ENCODE measurements at regions of chr15 and their contacts with region 1.

Region 1: GRCh38 chr15:75801859-75802593 is 41.2 kb upstream of the UBE2Q2 start:
- DNase-seq: peak; percentile 84 to 93
- H3K4me3 ChIP-seq: peak overlapping the region; percentile 17 to 23 (median 20)
- H3K27ac ChIP-seq: no peak overlapping the region
- H3K4me1 ChIP-seq: peaks cover 0 to 9% (median 8%) of the 10 kb centered on the region in 4 donors
- H3K27me3 ChIP-seq: peaks cover 0 to 56% (median 3%) of the 10 kb centered on the region in 3 donors
- CTCF ChIP-seq: peak in 5 of 7 experiments; percentile 38 to 98 (median 93)
- EP300 ChIP-seq: no peak
- POLR2A ChIP-seq: no peak

Region 2: GRCh38 chr15:75684642-75685041 is 117.4 kb before region 1 on chr15:
- intact Hi-C with region 1: loop called (anchors 10 kb)
- DNase-seq: no peak
- H3K4me3 ChIP-seq: no peak overlapping the region
- H3K27ac ChIP-seq: no peak overlapping the region
- H3K4me1 ChIP-seq: peaks cover 9 to 31% (median 17%) of the 10 kb centered on the region in 4 donors
- H3K27me3 ChIP-seq: no peaks in the 10 kb centered on the region
- CTCF ChIP-seq: no peak
- EP300 ChIP-seq: no peak
- POLR2A ChIP-seq: no peak

Region 3: DNA sequence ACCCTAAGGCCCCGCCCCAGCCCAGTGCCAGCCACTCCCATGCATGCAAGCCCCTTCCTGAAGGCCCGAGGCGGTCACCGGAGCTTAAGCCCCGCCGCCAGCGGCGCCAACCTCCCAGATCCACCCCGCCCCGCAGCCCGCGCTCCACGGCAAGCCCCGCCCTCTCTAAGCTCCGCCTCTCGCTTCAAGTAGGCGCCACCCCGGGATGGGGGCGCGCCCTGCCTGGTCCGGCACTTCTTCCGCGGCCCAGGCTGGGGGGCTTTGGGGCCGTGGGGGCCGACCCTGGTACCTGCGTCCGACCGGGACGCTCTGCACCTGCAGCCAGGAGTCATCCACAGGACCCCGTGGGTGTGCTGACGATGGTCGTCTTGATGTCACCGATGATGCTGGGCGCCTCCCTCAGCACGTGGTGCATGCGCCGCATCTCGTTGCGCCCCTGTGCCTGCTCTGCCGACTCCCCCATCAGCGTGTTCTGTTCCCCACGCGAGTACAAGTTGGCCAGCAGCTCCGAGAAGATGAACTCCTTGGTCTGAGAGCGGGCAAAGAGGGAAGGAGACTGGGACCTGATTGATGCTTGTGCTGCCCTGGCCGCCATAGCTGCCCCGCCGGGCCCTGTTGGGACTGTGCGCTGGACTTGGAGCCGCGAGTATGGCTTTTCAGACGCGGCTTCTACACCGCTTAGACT is 63.2 kb before region 1 on chr15:
- intact Hi-C with region 1: loop called (anchors 10 kb)
- DNase-seq: peak; percentile 98
- H3K4me3 ChIP-seq: peak overlapping the region; percentile 73 to 81 (median 76)
- H3K27ac ChIP-seq: peak overlapping the region in 4 of 5 donors; percentile 12 to 85 (median 74)
- H3K4me1 ChIP-seq: peaks cover 9 to 22% (median 14%) of the 10 kb centered on the region in 4 donors
- H3K27me3 ChIP-seq: no peaks in the 10 kb centered on the region
- CTCF ChIP-seq: no peak
- EP300 ChIP-seq: no peak
- POLR2A ChIP-seq: no peak

Measured in stomach (tissue), 19 donors.